Activated T-helper 1 cell treated with anti-CD3 and anti-CD28 coated beads, Interleukin-12 subunit alpha, Interleukin-12 subunit beta, Interleukin-2, Interleukin-4 antibody, amounts not matched to agents 30 ng/mL and 10 ng/mL and 1 ng/mL, durations not matched to agents 14 hours and 24 hours and 36 hours (primary cell): ENCODE measurements at regions of chr16 and their contacts with region 1.

Region 1: GRCh38 chr16:2720719-2721633 is 952 bp upstream of the PRSS27 start:
- DNase-seq: peak; percentile 89
- H3K4me3 Mint-ChIP-seq: peak overlapping the region; percentile 79
- H3K27ac Mint-ChIP-seq: peak overlapping the region; percentile 78
- H3K4me1 Mint-ChIP-seq: no peaks in the 10 kb centered on the region
- H3K27me3 Mint-ChIP-seq: peaks cover 3% of the 10 kb centered on the region

Region 2: GRCh38 chr16:2673066-2673999 is 47.6 kb before region 1 on chr16:
- intact Hi-C with region 1: loop called (anchors 2 kb)
- DNase-seq: peak; percentile 97
- H3K4me3 Mint-ChIP-seq: peak overlapping the region; percentile 87
- H3K27ac Mint-ChIP-seq: peak overlapping the region; percentile 81
- H3K4me1 Mint-ChIP-seq: peaks cover 30% of the 10 kb centered on the region
- H3K27me3 Mint-ChIP-seq: no peaks in the 10 kb centered on the region

Region 3: DNA sequence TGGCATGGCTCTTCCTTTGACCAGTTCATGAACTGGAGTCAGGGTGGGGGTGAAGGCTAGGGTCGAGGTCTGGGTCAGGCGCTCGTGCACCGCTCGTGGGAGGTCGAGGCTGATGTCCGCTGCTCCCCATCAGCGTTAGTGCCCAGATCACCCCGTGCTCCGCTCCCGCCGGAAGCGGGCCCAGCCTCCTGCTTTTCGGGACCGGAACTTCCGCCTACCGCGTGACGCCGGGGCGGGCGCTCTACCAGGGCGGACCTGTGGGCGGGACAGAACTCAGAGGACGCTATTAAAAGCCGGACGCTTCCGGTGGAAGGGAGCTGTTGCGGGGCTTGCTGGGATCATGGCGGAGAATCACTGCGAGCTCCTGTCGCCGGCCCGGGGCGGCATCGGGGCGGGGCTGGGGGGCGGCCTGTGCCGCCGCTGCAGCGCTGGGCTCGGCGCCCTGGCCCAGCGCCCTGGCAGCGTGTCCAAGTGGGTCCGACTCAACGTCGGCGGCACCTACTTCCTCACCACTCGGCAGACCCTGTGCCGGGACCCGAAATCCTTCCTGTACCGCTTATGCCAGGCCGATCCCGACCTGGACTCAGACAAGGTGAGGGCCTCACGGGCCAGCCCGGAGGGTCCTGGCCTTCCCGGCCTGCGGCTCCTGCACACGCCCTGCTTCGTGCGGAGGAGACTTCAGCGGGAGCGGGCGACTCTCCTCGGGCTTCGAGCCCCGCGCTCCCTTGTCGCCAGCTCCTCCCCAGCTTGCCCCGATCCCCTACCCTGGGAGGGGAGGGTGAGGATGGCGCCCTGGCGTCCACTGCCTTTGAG is 38.6 kb before region 1 on chr16 and contains the start of gene KCTD5:
- intact Hi-C with region 1: loop called (anchors 1 kb)
- DNase-seq: peak; percentile 96
- H3K4me3 Mint-ChIP-seq: peak within 1 kb of the TSS; percentile 99
- H3K27ac Mint-ChIP-seq: peak within 1 kb of the TSS; percentile 97
- H3K4me1 Mint-ChIP-seq: peaks cover 13% of the 10 kb centered on the region
- H3K27me3 Mint-ChIP-seq: peaks cover 2% of the 10 kb centered on the region
- total RNA-seq, gene KCTD5: 63.9 and 69.6 TPM in 2 replicates

Region 4: DNA sequence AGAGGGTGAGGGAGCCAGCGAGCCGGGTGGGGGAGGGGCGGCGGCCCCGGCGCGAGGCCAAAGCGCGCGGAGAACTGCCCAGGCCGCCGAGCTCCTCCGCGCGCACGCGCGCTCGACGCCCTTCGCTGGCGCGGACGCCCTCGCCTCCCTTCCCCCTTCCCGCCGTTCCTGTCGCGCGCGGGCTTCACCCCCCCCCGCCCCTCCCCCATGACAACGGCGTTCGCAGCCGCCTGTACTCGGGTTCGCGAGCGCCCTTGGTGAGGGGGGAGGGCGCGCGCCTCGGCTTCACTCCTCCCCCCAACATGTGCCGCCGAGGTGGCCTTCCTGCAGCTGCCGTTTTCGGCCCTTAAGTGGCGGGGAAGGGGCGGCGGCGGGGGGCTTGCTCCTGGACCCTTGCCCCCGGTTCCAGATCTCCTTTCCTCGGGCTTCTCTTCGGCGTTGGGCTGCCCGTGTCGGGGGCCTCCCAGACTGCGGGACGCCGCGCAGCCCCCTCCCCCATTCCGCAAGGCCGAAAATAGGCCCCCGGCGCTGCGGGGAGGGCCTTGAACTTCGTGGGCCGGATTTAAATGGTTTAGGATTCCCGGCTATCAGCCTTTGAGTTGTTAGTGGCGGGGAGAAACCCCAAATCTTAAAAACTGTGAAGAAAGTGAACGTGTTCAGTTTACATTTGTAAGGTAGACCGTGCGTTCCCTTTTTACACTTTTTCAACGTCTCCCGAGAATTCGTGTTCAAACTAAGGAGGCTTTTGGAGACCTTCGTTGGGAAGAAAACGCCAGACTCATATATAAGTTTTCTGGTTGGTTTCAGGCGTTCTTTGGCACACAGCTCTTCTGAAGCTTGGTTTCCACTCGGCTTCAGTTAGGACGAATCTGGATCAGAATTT is 32.1 kb after region 1 on chr16:
- intact Hi-C with region 1: loop called (anchors 2 kb)
- DNase-seq: no peak
- H3K4me3 Mint-ChIP-seq: peak overlapping the region; percentile 89
- H3K27ac Mint-ChIP-seq: peak overlapping the region; percentile 79
- H3K4me1 Mint-ChIP-seq: peaks cover 57% of the 10 kb centered on the region
- H3K27me3 Mint-ChIP-seq: no peaks in the 10 kb centered on the region

Region 5: GRCh38 chr16:2764718-2765117 is 43.7 kb after region 1 on chr16:
- intact Hi-C with region 1: no loop called
- DNase-seq: no peak
- H3K4me3 Mint-ChIP-seq: no peak overlapping the region
- H3K27ac Mint-ChIP-seq: no peak overlapping the region
- H3K4me1 Mint-ChIP-seq: peaks cover 22% of the 10 kb centered on the region
- H3K27me3 Mint-ChIP-seq: no peaks in the 10 kb centered on the region

Region 6: GRCh38 chr16:2777231-2777902 is 56.4 kb after region 1 on chr16 and contains the start of gene ELOB:
- intact Hi-C with region 1: loop called (anchors 1 kb)
- DNase-seq: peak; percentile 87
- H3K4me3 Mint-ChIP-seq: peak within 1 kb of the TSS; percentile 93
- H3K27ac Mint-ChIP-seq: peak within 1 kb of the TSS; percentile 94
- H3K4me1 Mint-ChIP-seq: peaks cover 27% of the 10 kb centered on the region
- H3K27me3 Mint-ChIP-seq: no peaks in the 10 kb centered on the region
- total RNA-seq, gene ELOB: 256 and 277 TPM in 2 replicates